ENCODE measurements at regions of chr5 and their contacts with region 1.

Region 1: DNA sequence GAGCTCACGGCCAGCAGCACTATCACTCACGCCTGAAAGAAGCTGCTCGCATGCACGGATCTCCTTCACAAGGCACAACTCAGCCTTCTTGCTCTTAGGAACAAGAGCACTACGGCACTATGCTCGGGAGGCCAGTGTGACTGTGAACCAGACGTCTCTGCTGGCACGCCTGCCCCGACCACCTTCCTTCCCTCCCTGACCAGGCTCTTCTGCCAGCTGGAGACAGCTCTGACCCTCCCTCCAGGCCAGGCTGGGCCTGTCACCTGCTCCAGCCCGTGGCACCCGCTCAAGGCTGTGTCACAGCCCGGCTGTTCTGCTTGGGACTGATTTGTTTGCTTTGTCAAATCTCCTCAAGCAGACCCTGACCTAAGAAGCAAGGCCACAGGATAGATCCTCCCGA is 7.0 kb downstream of the TBC1D9B start:
- DNase-seq: no peak
- H3K4me3 ChIP-seq: no peak overlapping the region
- H3K27ac ChIP-seq: no peak overlapping the region
- H3K4me1 ChIP-seq: no peaks in the 10 kb centered on the region
- H3K27me3 ChIP-seq: no peaks in the 10 kb centered on the region
- CTCF ChIP-seq: no peak

Region 2: DNA sequence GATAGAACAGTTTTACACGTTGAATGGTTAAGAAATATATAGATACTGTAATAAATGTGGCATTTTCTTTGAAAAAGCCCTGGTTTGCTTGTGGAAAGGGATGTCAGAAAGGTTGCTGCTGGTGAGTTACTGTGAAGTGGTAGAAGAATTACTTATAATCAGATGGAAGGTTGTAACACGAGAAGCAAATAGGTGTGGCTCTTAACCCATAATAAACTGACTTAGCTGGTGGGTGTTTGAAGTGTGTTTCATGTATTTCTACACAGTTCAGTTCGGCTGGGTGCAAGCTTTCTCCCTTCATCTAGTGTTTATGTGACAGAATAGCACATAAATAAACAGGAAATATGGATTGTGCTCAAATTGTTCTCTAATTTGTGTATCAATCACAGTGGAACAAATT is 599.0 kb after region 1 on chr5:
- CTCF ChIA-PET with region 1: no interaction called
- POLR2A ChIA-PET with region 1: interaction called, 15 read pairs
- intact Hi-C with region 1: no loop called
- DNase-seq: no peak
- H3K4me3 ChIP-seq: no peak overlapping the region
- H3K27ac ChIP-seq: no peak overlapping the region
- H3K4me1 ChIP-seq: peaks cover 6% of the 10 kb centered on the region
- H3K27me3 ChIP-seq: no peaks in the 10 kb centered on the region
- CTCF ChIP-seq: no peak

Measured in A673 (cell line).